Heart right ventricle (tissue), 16 donors: ENCODE measurements at regions of chr7 and their contacts with region 1.

Region 1: DNA sequence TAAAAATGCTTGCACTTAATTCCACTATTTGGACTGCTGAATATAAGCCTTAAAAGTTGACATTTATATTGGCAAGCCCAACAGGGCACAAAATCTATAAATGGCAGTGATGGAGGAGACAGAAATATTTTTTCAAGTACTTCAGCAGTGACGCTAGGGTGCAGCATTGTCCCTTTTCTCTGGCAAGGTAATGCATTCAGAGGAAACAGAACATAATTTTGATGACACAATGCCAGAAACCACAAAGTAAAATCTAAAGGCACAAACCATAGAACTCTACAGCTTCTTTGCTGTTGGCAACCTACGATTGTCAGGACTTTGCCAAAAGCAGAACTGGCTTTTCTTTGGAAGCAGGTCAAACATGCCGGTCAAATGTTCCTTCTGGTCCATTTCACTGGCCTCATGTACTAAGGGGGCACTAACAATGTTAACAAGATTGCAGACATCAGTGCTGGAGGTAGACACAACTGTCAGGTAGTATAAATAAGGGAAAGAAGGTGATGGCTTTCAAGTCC is 30.9 kb upstream of the FAM133B start:
- DNase-seq: peak; percentile 24 to 74
- ATAC-seq: peak; percentile 86 to 90 (median 88)
- H3K4me3 ChIP-seq: no peak overlapping the region
- H3K27ac ChIP-seq: peak overlapping the region in 5 of 10 donors; percentile 8 to 58 (median 41)
- H3K4me1 ChIP-seq: peaks cover 3 to 29% (median 14%) of the 10 kb centered on the region in 9 donors
- H3K27me3 ChIP-seq: no peaks in the 10 kb centered on the region
- CTCF ChIP-seq: peak; percentile 60 to 86 (median 78)

Region 2: DNA sequence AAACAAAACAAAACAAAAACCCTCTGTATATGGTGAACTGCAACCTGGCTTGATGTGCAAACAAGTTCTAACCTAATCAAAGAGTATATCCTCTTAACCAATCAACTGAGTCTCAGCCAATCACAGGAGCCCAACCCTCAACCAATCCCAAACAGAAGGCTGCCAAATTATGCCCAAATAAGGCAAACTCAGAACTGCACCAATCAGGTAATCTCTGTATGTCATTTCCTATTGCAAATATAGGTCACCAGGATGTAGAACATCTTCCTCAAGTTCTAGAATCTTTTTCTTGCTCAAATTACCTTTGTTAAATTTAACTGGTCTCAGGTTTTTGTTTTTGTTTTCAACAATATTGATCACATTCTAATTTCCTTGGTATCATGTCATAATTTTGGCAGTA is 36.1 kb before region 1 on chr7:
- intact Hi-C with region 1: no loop called
- DNase-seq: no peak
- ATAC-seq: no peak
- H3K4me3 ChIP-seq: no peak overlapping the region
- H3K27ac ChIP-seq: peak overlapping the region in 2 of 10 donors; percentile 0 to 15
- H3K4me1 ChIP-seq: peaks cover 3 to 55% (median 42%) of the 10 kb centered on the region in 9 donors
- H3K27me3 ChIP-seq: no peaks in the 10 kb centered on the region
- CTCF ChIP-seq: no peak

Region 3: DNA sequence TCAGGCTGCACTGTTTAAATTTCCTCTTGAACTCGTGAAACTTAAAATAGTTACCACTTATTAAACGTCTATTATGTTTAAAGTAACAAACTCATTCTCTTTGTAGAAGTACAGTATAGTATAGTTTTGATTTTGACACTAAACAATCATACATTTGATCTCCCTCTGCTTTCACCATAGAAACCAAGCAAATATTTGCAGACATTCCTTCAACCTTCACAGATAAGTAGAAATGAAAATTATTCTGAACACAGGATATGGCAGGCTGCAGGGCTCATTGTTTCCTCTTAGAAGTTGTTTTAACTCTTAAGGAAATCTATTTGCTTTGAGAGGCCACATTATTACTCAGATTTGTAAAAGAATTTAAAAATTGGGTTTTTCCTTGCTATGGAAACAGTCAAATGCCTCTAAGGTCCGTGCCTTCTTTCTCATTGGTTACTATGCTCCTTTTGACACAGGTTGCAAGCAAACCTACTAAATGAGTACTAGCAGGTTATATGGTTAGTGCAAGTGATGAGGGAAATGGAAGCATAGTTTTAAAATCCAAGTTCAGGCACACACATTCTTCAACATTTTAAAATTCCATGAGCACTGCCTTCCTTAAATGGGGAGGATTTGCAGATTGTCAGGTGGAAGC is 61.9 kb after region 1 on chr7:
- intact Hi-C with region 1: loop called in 2 of 10 experiments (anchors 10 kb)
- DNase-seq: no peak
- ATAC-seq: no peak
- H3K4me3 ChIP-seq: no peak overlapping the region
- H3K27ac ChIP-seq: peak overlapping the region in 2 of 10 donors; percentile 16 to 18
- H3K4me1 ChIP-seq: peaks cover 0 to 41% (median 19%) of the 10 kb centered on the region in 9 donors
- H3K27me3 ChIP-seq: no peaks in the 10 kb centered on the region
- CTCF ChIP-seq: no peak

Region 4: DNA sequence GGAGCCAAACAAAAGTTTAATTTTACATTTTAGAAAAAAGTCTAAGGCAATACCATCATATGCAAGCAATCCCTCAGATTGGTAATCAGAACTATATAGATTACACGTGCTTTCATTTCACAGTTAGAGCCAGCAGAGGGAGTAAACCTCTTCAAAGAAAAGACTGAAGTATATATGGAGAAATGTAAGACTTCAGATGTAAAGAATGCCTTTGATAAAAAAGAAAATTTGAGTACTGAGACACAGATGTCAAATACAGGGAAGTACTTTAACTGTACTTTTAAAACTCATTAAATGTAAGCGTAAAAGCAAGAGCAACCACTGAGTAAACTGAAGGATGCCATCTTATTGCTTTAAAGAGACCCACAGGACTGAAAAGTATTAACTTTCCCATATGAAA is 70.5 kb after region 1 on chr7:
- intact Hi-C with region 1: loop called in 7 of 10 experiments (anchors 5 to 10 kb)
- DNase-seq: no peak
- ATAC-seq: peak in 1 of 8 donors; percentile 47
- H3K4me3 ChIP-seq: no peak overlapping the region
- H3K27ac ChIP-seq: no peak overlapping the region
- H3K4me1 ChIP-seq: peaks cover 0 to 29% (median 16%) of the 10 kb centered on the region in 9 donors
- H3K27me3 ChIP-seq: no peaks in the 10 kb centered on the region
- CTCF ChIP-seq: peak; percentile 31 to 71 (median 54)

Region 5: DNA sequence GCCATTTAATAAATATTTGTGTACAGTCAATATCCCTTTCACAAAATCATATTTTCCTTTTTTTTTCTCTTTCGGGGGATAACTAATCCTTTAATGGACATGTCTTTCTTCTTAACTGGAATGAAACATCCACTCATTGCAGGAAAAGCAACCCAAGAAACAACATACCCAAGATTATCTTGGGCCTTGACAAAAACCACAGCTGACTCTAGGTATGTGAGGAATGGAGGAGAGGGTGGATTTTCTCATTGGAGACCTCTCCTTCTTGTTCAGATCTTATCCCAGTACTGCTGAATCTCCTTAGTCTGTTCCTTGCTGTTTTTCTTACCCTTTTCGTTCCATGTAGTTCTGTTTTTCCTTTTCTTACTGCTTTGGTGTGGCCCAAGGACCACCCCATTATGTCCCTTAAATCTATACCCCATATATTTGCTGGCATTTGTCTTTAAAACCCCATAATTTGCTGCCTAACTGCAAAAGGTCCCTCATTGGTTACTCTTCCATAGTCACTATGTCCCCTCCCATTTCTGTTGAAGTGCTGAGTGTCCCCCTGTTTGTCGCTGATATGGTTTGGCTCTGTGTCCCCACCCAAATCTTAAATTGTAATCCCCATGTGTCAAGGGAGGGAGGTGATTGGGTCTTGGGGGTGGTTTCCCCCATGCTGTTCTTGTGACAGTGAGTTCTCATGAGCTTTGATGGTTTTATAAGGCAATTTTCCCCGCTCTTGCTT is 222.1 kb after region 1 on chr7:
- intact Hi-C with region 1: loop called in 1 of 10 experiments (anchors 10 kb)
- DNase-seq: no peak
- ATAC-seq: no peak
- H3K4me3 ChIP-seq: no peak overlapping the region
- H3K27ac ChIP-seq: no peak overlapping the region
- H3K4me1 ChIP-seq: no peaks in the 10 kb centered on the region
- H3K27me3 ChIP-seq: no peaks in the 10 kb centered on the region
- CTCF ChIP-seq: no peak

Region 6: DNA sequence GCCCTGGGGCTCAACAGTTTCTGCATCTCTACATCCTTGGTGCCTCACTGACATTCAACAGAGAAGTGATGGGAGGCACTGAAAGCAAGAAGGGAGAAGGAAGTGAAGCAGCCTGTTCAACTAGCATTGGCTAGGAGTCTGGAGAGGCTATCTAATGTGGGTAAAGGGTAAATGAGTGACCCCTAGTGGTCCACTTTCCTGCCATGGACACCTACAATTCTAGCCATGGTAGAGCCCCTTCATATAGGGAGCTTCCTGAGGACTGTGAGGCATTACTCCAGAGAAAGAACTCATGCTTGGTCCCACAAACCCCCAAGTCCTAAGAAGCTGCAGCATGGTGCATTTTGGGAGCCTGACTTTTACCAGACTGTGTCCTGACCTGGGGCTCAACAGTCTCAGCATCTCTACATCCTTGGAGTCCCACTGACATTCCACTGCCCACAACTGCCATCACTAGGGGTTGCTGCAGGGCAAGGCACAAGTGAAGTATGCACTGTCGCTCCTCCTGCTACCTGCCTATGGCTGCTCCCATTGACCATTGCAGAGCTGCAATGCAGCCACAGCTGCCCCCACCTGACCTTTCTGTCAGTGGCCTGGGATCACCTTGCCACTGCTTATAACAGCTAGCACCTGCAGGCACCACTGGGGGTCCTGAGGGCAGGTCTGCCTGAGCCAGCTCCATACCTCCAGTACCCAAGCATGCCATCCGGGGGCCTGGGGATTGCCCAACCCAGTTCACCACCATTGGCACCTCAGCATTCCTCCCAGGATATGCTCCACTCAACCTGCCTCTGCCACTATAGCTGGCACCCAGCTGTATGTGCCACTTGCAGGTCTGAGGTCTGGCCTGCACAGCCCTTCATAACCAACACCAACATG is 259.4 kb after region 1 on chr7:
- intact Hi-C with region 1: loop called in 2 of 10 experiments (anchors 1 to 5 kb)
- DNase-seq: no peak
- ATAC-seq: peak in 4 of 8 donors; percentile 46 to 68 (median 49)
- H3K4me3 ChIP-seq: no peak overlapping the region
- H3K27ac ChIP-seq: no peak overlapping the region
- H3K4me1 ChIP-seq: no peaks in the 10 kb centered on the region
- H3K27me3 ChIP-seq: no peaks in the 10 kb centered on the region
- CTCF ChIP-seq: peak in 7 of 9 donors; percentile 20 to 47 (median 36)

Region 7: GRCh38 chr7:92988051-92988450 is 367.0 kb after region 1 on chr7:
- intact Hi-C with region 1: loop called in 2 of 10 experiments (anchors 2 to 5 kb)
- DNase-seq: no peak
- ATAC-seq: peak in 1 of 8 donors; percentile 25
- H3K4me3 ChIP-seq: no peak overlapping the region
- H3K27ac ChIP-seq: no peak overlapping the region
- H3K4me1 ChIP-seq: no peaks in the 10 kb centered on the region
- H3K27me3 ChIP-seq: no peaks in the 10 kb centered on the region
- CTCF ChIP-seq: peak in 8 of 9 donors; percentile 15 to 54 (median 39)